ENCODE measurements at regions of chr1 and their contacts with region 1.

Region 1: DNA sequence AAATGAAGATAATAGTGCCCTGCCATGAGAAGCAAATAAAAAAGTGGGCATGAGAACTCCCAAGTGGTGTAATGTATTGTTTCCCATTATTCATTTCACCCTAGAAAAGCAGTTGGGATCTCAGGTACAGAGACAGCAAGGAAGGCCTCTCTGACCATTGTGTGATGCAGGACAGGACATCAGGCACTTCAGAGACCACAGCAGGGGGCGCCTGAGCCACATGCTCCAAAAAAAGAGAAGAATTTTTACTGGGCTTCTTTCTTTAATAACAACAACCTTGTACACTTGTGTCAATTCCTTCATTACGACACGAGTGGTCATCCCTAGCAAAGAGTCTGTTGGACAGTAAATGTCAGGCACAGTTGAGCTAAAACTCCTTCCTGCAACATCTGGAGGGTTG is 533.3 kb downstream of the OMA1 start:
- DNase-seq: no peak
- H3K4me3 ChIP-seq: no peak overlapping the region
- H3K4me1 ChIP-seq: no peaks in the 10 kb centered on the region
- H3K27me3 ChIP-seq: no peaks in the 10 kb centered on the region

Region 2: GRCh38 chr1:56831871-56832693 is 1181.2 kb before region 1 on chr1:
- in situ Hi-C with region 1: loop called (anchors 25 kb)
- DNase-seq: peak; percentile 56 to 73
- H3K4me3 ChIP-seq: no peak overlapping the region
- H3K4me1 ChIP-seq: no peaks in the 10 kb centered on the region
- H3K27me3 ChIP-seq: no peaks in the 10 kb centered on the region